Endothelial cell of umbilical vein (primary cell): ENCODE measurements at regions of chr16 and their contacts with region 1.

Region 1: DNA sequence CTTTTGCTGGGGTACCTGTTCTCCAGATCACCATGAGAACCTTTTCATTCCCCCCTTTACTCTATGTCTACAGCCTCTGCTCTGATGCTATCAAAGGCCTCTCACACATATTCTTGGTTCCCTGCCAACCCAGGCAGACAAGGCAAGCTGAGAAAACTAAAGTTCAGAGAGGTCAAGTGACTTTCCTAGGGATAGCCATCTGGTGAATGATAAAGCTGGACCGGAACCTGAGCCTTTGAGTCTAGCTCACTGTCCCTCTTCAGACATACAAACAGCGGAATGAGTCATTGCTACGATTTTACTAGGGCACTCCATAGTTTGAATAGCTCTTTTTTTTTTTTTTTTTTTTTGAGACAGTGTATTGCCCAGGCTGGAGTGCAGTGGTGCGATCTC is 73.3 kb downstream of the XYLT1 start:
- DNase-seq: peak; percentile 79
- H3K4me3 ChIP-seq: no peak overlapping the region
- H3K27ac ChIP-seq: peak overlapping the region; percentile 94
- H3K4me1 ChIP-seq: peaks cover 25% of the 10 kb centered on the region
- H3K27me3 ChIP-seq: no peaks in the 10 kb centered on the region
- CTCF ChIP-seq: no peak
- POLR2A ChIP-seq: no peak

Region 2: GRCh38 chr16:17359788-17360390 is 37.6 kb before region 1 on chr16:
- CTCF ChIA-PET with region 1: no interaction called
- POLR2A ChIA-PET with region 1: no interaction called
- dilution Hi-C with region 1: no loop called
- intact Hi-C with region 1: loop called (anchors 2 kb)
- DNase-seq: no peak
- H3K4me3 ChIP-seq: no peak overlapping the region
- H3K27ac ChIP-seq: no peak overlapping the region
- H3K4me1 ChIP-seq: peaks cover 24% of the 10 kb centered on the region
- H3K27me3 ChIP-seq: no peaks in the 10 kb centered on the region
- CTCF ChIP-seq: no peak
- POLR2A ChIP-seq: no peak

Region 3: DNA sequence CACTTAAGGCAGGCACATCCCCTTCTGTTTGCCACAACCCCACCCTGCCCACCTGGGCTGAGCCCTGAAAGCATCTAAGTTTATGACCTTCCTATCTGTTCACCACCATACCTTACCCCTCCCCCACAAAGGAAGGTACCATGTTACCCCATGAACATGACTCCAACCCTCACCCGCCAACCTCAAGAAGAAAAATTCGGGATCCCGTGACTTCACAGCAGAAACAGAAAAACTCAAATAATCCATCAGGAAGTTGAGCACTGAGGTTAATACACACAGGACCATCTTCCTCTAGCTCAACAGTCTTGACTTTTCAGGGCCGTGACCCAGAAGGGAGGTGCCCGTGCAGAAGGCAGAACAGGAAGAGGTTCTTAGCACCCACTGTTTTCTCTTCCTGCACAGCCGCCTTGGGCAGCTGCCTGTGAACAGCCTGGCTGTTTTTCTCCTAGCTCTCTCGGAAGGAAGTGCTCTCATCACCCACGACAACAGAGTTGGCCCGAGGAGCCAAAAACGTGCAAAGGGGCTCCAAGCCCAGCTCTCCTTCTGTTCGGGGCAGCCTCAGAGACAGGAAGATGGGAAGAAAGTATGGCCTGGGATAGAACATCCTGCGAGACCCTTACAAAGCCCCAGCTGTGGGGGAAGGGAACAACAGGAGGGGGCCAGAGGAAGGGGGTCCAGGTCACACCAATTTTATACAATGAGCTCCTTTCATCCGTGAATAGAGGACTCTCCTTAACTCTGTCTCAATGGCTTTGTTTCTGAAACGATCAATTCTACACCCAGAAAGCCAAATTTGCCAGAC is 27.9 kb before region 1 on chr16:
- CTCF ChIA-PET with region 1: no interaction called
- POLR2A ChIA-PET with region 1: no interaction called
- dilution Hi-C with region 1: no loop called
- intact Hi-C with region 1: loop called (anchors 1 kb)
- DNase-seq: peak; percentile 3
- H3K4me3 ChIP-seq: no peak overlapping the region
- H3K27ac ChIP-seq: peak overlapping the region; percentile 20
- H3K4me1 ChIP-seq: peaks cover 29% of the 10 kb centered on the region
- H3K27me3 ChIP-seq: no peaks in the 10 kb centered on the region
- CTCF ChIP-seq: no peak
- POLR2A ChIP-seq: no peak

Region 4: GRCh38 chr16:17380613-17381012 is 16.9 kb before region 1 on chr16:
- CTCF ChIA-PET with region 1: no interaction called
- POLR2A ChIA-PET with region 1: no interaction called
- dilution Hi-C with region 1: no loop called
- intact Hi-C with region 1: loop called (anchors 1 kb)
- DNase-seq: no peak
- H3K4me3 ChIP-seq: no peak overlapping the region
- H3K27ac ChIP-seq: peak overlapping the region; percentile 18
- H3K4me1 ChIP-seq: peaks cover 18% of the 10 kb centered on the region
- H3K27me3 ChIP-seq: no peaks in the 10 kb centered on the region
- CTCF ChIP-seq: no peak
- POLR2A ChIP-seq: no peak